Ovary (tissue), 10 donors: ENCODE measurements at regions of chr1 and their contacts with region 1.

Region 1: DNA sequence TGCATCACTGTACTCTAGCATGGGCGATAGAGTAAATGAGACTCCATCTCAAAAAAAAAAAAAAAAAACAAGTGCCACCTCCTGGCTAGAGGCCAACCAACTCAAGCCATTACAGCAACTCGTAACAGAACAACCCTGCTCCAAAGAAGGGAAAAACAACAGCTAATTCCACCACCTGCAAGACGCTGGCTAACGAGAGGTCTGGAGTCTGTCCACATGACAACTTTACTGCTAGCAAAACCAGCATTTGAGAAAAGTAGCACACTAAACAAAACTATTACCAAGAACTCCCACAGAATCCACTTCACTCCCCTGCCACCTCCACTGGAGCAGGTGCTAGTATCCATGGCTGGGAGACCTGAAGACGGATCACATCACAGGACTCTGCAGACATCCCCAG is 24.1 kb upstream of the EGLN1 start:
- DNase-seq: no peak
- H3K4me3 ChIP-seq: no peak overlapping the region
- H3K27ac ChIP-seq: no peak overlapping the region
- H3K4me1 ChIP-seq: no peaks in the 10 kb centered on the region
- H3K27me3 ChIP-seq: no peaks in the 10 kb centered on the region
- CTCF ChIP-seq: no peak
- EP300 ChIP-seq: no peak
- POLR2A ChIP-seq: no peak

Region 2: DNA sequence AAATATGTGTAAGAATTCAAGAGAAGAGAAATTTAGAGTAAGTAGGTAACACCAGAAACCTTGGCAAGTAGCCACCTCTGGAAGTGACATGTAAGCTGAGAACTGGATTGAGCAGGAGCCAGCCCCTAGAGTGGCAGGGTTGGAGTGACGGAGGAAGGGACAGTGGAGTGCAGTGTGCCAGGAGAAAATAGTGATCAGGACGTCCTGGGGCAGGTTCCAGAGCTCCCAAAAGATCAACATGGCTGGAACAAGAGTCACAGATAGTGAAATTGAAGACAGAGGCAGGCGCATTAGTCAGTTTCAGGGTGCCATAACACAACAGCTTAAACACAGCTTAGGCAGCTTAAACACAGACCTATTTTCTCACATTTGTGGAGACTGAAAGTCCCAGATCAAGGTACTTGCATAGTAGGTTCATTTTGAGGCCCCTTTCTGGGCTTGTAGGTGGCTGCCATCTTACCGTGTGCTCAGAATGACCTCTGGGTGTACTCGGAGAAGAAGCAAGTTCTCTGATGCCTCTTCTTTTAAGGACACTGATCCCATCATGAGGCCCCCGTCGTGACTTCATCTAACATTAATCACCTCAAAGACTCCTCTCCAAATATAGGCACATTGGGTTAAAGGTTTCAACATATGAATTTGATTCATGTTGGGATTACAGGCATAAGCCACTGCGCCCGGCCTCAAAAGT is 167.9 kb before region 1 on chr1:
- intact Hi-C with region 1: loop called in 1 of 4 experiments (anchors 5 kb)
- DNase-seq: no peak
- H3K4me3 ChIP-seq: no peak overlapping the region
- H3K27ac ChIP-seq: no peak overlapping the region
- H3K4me1 ChIP-seq: no peaks in the 10 kb centered on the region
- H3K27me3 ChIP-seq: no peaks in the 10 kb centered on the region
- CTCF ChIP-seq: no peak
- EP300 ChIP-seq: no peak
- POLR2A ChIP-seq: no peak